Posterior vena cava (tissue), 2 donors: ENCODE measurements at regions of chr19 and their contacts with region 1.

Region 1: DNA sequence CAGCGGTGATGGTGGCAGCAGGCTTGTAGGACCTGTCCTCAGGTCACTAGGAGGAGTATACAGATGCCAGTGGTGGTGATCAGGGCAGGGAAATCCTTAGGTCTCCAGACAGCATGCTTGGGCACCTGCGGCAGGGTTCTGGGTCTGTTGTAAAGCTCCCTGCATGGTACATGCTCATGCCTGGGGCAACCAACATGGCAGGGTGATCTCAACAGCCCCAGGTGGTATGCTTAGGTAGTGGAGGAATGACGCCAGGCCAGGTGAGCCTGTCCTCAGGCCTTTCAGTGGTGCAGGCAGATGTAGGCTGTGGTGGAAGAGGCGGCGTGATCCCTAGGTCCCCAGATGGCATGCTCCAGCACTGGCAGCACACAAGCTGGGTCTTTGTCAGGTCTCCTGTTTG is 10.3 kb upstream of the ZNF224 start:
- DNase-seq: no peak

Region 2: GRCh38 chr19:43983912-43984686 is 99.8 kb before region 1 on chr19 and contains the start of gene ZNF155:
- intact Hi-C with region 1: no loop called
- DNase-seq: peak; percentile 94
- total RNA-seq, gene ZNF155: 5.0 to 6.7 TPM

Region 3: DNA sequence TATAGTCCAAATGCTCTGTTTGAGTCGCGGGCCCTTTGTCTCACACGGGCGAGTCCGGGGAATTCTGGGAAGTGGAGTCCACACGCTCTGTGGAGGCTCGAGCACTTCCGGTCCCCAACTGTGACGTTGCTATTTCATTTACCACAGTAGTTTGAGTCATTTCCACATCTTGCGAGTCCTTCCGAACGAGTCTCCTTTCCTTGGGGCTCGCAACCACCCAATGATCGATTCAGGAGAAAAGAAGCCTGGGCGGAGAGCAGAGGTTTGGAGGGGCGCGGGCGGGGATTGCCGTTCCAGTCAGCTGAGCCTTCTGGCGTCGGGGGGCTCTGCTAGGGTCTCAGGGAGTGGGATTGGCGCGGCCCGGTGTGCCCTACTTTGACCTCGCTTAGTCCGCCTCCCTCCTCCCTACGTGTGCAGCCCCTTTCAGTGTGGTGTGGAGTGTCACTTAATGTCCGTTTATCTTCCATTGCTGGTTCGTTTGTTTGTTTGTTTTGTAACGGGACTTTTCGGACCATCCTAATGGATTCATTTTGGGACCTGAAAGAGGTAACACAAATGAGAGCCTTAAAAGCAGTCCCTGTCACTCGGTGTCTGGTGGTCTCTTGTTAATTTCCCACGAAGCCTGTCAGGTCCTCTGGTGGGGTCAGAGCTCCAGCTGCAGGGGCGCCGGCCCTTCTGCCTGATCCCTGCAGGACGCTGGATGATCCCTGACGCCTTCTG is 58.5 kb before region 1 on chr19 and contains the start of gene ZNF222:
- intact Hi-C with region 1: loop called in 1 of 2 experiments (anchors 10 kb)
- DNase-seq: peak; percentile 94
- total RNA-seq, gene ZNF222: 3.5 to 4.1 TPM